ENCODE measurements at regions of chr17 and their contacts with region 1.

Region 1: GRCh38 chr17:42817866-42818265 is 6.2 kb downstream of the BECN1 start:
- DNase-seq: no peak
- ATAC-seq: no peak
- H3K4me3 ChIP-seq: no peak overlapping the region
- H3K27ac ChIP-seq: no peak overlapping the region
- H3K4me1 ChIP-seq: peaks cover 4% of the 10 kb centered on the region
- H3K27me3 ChIP-seq: no peaks in the 10 kb centered on the region
- CTCF ChIP-seq: no peak

Region 2: DNA sequence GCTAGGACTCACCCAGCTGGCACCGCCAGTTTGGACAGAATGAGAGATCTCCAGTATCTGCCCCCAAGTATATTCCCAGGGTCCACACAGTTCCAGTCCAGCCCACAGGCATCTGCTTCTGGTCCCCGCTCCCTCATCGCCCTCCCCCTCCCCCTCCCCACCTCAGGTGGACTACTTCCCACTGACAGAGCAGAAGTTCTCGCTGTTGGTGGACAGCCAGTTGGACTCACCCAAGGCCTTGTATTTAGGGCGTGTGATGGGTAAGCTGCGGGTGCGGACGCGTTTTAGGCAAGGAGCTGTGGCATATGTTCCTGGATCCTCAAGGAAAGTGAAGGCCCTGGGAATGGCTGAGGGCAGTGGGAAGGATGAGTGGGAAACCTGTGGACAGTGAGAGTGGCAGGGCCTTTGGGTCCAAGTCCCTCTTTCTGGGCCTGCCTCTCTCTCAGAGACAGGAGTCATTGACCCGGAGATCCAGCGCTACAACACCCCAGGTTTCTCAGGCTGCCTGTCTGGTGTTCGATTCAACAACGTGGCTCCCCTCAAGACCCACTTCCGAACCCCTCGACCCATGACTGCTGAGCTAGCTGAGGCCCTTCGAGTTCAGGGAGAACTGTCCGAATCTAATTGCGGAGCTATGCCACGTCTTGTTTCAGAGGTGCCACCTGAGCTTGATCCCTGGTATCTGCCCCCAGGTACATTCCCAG is 120.6 kb before region 1 on chr17:
- CTCF ChIA-PET with region 1: interaction called, 12 read pairs
- POLR2A ChIA-PET with region 1: no interaction called
- in situ Hi-C with region 1: no loop called
- intact Hi-C with region 1: no loop called
- DNase-seq: no peak
- ATAC-seq: no peak
- H3K4me3 ChIP-seq: no peak overlapping the region
- H3K27ac ChIP-seq: no peak overlapping the region
- H3K4me1 ChIP-seq: no peaks in the 10 kb centered on the region
- H3K27me3 ChIP-seq: no peaks in the 10 kb centered on the region
- CTCF ChIP-seq: no peak